Activated CD4-positive, alpha-beta T cell treated with anti-CD3 and anti-CD28 coated beads, Interleukin-2, amount 10 ng/mL, durations not matched to agents 24 days and 14 days (primary cell): ENCODE measurements at regions of chr22 and their contacts with region 1.

Region 1: DNA sequence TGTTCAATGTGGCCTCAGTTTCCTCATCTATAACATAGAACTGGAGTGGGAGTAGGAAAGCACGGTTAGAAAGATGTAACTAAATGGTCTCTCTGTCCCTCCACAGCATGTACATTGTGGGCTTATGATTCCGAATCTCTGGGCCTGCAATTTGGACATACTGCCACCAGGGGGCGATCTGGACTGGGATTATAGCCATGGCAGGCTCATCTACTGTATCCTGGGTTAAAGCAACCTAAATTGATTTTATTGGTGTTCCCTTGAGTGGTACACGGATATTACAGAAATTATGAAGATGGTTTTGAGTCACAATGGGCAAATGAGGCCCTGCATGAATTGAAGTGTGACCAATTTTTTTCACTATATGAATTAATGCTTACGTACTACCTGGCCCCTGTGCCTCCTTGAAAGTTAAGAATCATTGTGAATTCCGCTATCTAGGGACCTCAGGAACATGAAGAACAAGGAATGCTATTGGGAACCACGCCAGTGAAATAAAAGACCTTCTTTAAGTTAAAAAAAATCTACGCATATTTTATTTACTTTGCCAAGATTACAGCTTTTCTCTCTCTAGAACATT is 32.9 kb downstream of the TST start:
- DNase-seq: peak; percentile 78
- H3K4me3 Mint-ChIP-seq: no peak overlapping the region
- H3K27ac Mint-ChIP-seq: no peak overlapping the region
- H3K4me1 Mint-ChIP-seq: no peaks in the 10 kb centered on the region
- H3K27me3 Mint-ChIP-seq: peaks cover 25% of the 10 kb centered on the region

Region 2: GRCh38 chr22:37260901-37261336 is 274.6 kb after region 1 on chr22:
- intact Hi-C with region 1: loop called (anchors 2 kb)
- DNase-seq: peak; percentile 90
- H3K4me3 Mint-ChIP-seq: no peak overlapping the region
- H3K27ac Mint-ChIP-seq: peak overlapping the region; percentile 38
- H3K4me1 Mint-ChIP-seq: peaks cover 30% of the 10 kb centered on the region
- H3K27me3 Mint-ChIP-seq: peaks cover 6% of the 10 kb centered on the region